Activated B cell treated with CpG ODN at 0.5 μM for 24 hours (primary cell): ENCODE measurements at regions of chr1 and their contacts with region 1.

Region 1: GRCh38 chr1:234499119-234499942 is 20.4 kb upstream of the TARBP1 start:
- DNase-seq: peak; percentile 78
- ATAC-seq: peak; percentile 91
- H3K4me3 Mint-ChIP-seq: peak overlapping the region; percentile 55
- H3K27ac Mint-ChIP-seq: peak overlapping the region; percentile 66
- H3K4me1 Mint-ChIP-seq: peaks cover 28% of the 10 kb centered on the region
- H3K27me3 Mint-ChIP-seq: no peaks in the 10 kb centered on the region
- CTCF ChIP-seq: peak; percentile 38

Region 2: DNA sequence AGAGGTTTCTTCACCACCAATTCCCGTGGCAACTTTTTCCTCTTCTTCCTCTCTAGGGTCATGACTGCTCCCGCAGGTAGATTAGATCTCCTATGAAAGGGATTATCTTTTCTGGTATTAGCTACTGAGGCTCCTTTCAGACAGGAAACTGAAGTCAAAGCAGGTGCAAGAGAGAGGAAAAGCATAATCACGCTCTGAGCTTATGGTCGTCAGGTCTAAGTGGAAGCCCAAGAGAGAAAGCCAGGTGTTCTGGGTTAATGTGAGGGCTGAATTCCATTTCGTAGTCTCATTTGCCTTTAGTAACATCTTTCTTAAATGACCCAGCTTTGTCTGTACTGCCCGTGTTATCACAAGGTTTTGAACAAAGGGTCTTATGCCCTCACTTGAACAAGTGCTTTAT is 1180.1 kb before region 1 on chr1:
- CTCF ChIA-PET with region 1: no interaction called
- POLR2A ChIA-PET with region 1: no interaction called
- intact Hi-C with region 1: no loop called
- DNase-seq: no peak
- ATAC-seq: no peak
- H3K4me3 Mint-ChIP-seq: no peak overlapping the region
- H3K27ac Mint-ChIP-seq: no peak overlapping the region
- H3K4me1 Mint-ChIP-seq: no peaks in the 10 kb centered on the region
- H3K27me3 Mint-ChIP-seq: peaks cover 21% of the 10 kb centered on the region
- CTCF ChIP-seq: no peak

Region 3: DNA sequence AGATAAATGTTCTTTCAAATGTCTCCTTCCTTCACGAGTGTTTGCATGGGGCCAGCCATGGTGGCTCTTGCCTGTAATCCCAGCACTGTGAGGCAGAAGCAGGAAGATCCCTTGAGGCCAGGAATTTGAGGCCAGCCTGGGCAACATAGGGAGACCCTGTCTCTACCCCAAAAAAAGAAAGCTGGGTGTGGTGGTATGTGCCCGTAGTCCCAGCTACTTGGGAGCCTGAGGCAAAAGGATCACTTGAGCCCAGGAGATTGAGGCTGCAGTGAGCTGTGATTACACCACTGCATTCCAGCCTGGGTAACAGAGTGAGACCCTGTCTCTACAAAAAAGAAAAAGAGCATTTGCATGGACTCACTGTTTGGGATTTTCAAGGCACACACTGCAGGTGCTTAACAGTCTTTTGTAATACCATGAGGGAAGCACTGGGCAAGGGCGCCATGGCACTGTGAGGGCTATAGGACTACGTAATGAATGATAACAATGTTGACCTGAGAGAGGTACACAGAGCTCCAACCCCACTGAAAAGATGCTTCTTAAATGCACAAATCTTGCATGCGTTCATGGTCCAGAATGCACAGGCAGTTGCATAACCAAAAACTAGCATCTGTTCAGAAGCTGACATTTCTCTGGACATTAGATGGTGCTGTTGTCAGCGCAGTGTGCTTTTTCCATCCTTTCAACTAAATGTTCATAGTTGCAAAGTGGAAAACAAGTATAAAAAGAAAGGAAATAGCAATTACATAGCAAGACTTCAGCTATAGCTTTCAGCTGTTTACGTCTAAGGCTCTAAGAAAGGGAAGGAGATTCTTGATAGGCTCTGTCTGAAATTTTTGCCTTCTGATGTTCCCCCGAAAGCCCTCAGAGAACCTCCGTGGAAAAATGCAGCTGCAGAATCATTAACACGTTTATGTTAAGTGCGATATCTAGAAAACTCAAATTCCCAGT is 12.6 kb before region 1 on chr1:
- CTCF ChIA-PET with region 1: interaction called, 5 read pairs
- POLR2A ChIA-PET with region 1: interaction called, 3 read pairs
- intact Hi-C with region 1: loop called (anchors 1 kb)
- DNase-seq: no peak
- ATAC-seq: peak; percentile 47
- H3K4me3 Mint-ChIP-seq: peak overlapping the region; percentile 11
- H3K27ac Mint-ChIP-seq: no peak overlapping the region
- H3K4me1 Mint-ChIP-seq: peaks cover 29% of the 10 kb centered on the region
- H3K27me3 Mint-ChIP-seq: peaks cover 7% of the 10 kb centered on the region
- CTCF ChIP-seq: no peak

Region 4: GRCh38 chr1:234599617-234600417 is 100.5 kb after region 1 on chr1:
- CTCF ChIA-PET with region 1: interaction called, 19 read pairs
- POLR2A ChIA-PET with region 1: interaction called, 4 read pairs
- intact Hi-C with region 1: loop called (anchors 1 kb)
- DNase-seq: peak; percentile 67
- ATAC-seq: peak; percentile 73
- H3K4me3 Mint-ChIP-seq: peak overlapping the region; percentile 86
- H3K27ac Mint-ChIP-seq: peak overlapping the region; percentile 89
- H3K4me1 Mint-ChIP-seq: peaks cover 66% of the 10 kb centered on the region
- H3K27me3 Mint-ChIP-seq: no peaks in the 10 kb centered on the region
- CTCF ChIP-seq: no peak

Region 5: DNA sequence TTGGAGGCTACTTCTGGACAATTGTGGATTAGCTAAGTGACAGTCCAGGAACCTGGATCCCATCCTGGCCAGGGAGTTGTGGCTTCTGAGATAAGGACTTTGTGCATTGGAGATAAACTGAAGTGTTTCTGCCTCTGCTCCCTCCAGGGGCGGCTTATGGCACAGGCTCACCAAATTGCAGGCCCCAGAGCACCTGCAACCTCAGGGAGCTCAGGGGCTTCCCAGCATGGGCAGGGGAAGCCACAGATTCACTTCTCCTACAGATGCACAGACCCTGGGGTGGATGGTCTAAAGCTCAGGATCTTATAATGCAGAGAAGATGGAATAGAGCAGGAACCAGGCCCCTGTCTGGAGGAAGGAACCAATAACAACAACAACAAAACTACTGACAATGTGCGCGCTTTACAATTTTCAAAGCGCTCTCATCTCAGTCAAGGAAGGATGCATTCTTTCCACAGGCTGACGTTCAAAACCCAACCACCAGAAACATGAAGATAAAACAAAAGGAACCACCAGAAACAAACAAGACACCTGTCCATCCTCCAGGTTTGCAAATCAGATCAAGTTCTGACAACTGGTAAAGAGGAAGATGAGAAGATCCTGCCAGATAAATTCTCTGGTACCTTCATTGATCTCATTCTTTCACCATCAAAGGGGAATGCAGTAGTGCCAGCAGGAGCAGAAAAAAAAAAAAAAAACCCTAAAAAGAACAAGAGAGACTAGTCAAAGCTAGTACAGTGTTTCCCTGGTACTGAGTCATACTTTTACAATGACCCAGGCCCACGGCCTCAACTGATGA is 231.6 kb after region 1 on chr1:
- CTCF ChIA-PET with region 1: no interaction called
- POLR2A ChIA-PET with region 1: no interaction called
- intact Hi-C with region 1: loop called (anchors 1 kb)
- DNase-seq: peak; percentile 37
- ATAC-seq: peak; percentile 81
- H3K4me3 Mint-ChIP-seq: peak overlapping the region; percentile 44
- H3K27ac Mint-ChIP-seq: peak overlapping the region; percentile 79
- H3K4me1 Mint-ChIP-seq: peaks cover 46% of the 10 kb centered on the region
- H3K27me3 Mint-ChIP-seq: no peaks in the 10 kb centered on the region
- CTCF ChIP-seq: no peak

Region 6: DNA sequence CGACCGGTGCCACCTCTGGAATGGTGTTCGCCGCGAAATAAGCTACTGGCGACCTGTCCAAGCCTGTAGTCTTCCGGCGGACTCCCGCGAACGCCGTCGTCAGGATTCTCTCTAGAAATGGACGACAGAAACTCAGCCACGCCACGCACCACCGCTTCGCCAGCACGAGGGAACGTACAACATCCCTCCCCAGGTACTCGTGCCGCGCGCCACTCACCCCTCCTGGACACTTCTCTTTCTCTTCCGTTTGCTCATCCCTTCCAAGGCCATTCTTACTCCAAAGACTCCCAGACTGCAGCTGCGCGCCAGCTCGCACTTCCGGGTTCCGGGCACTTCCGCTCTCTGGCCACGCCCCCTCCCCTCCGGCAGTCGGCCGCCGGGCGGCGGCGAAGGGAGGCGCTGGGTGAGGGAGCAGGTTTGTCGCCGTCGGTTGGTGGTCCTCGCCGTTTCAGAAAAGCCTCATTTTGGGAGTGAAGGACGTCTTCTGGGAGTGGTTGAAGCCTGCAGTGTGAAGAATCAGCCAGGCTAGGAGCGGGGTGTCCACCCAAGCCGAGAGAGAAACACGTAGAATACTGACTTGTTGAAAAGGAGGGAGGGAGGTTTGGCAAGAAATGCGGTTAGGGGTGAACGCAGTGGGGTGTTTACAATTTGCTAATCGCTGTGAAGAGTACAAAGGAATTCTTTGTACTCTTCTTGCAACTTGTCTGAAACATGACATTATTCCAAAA is 661.8 kb after region 1 on chr1 and contains the start of gene RBM34:
- CTCF ChIA-PET with region 1: no interaction called
- POLR2A ChIA-PET with region 1: no interaction called
- intact Hi-C with region 1: loop called (anchors 1 kb)
- DNase-seq: peak; percentile 90
- ATAC-seq: peak; percentile 94
- H3K4me3 Mint-ChIP-seq: peak within 1 kb of the TSS; percentile 96
- H3K27ac Mint-ChIP-seq: peak within 1 kb of the TSS; percentile 99
- H3K4me1 Mint-ChIP-seq: peaks cover 21% of the 10 kb centered on the region
- H3K27me3 Mint-ChIP-seq: no peaks in the 10 kb centered on the region
- CTCF ChIP-seq: no peak
- total RNA-seq, gene RBM34: 122 and 128 TPM in 2 replicates